Panc1 (cell line): ENCODE measurements at regions of chr18 and their contacts with region 1.

Region 1: DNA sequence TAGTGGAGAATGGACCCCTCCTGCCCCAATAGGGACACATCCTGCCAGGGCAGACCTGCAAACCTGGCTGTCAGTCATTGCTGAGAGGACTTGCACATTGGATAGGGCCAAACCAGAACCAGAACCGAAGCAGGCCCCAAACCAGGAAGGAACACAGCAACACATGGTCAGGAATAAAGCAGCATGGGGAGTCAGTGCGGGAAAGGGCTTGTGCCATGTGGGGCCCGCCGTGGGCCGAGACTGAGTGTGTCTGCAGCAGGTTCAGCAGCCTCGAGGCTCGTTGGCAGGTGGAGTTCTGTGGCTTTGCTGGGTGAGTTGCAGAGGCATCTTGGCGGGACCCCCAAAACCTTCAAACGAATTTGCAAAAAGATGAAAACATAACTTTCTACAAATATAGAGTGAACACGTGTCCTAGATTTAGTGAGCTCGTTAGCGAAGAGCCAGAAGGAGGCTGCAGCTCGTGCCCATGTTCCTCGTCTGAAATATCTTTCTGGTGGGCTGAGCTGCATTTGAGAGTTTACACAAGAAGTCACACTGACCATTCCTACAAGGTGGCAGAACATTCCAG is 44.9 kb upstream of the LDLRAD4 start:
- DNase-seq: no peak
- ATAC-seq: no peak
- H3K4me3 ChIP-seq: no peak overlapping the region
- H3K27ac ChIP-seq: no peak overlapping the region
- H3K4me1 ChIP-seq: no peaks in the 10 kb centered on the region; the same call in 1 of the 2 replicates
- H3K27me3 ChIP-seq: no peaks in the 10 kb centered on the region
- CTCF ChIP-seq: no peak

Region 2: GRCh38 chr18:13239171-13239956 is 65.7 kb after region 1 on chr18:
- CTCF ChIA-PET with region 1: no interaction called
- POLR2A ChIA-PET with region 1: no interaction called
- in situ Hi-C with region 1: no loop called
- intact Hi-C with region 1: no loop called
- DNase-seq: no peak
- ATAC-seq: no peak
- H3K4me3 ChIP-seq: no peak overlapping the region
- H3K27ac ChIP-seq: no peak overlapping the region
- H3K4me1 ChIP-seq: no peaks in the 10 kb centered on the region
- H3K27me3 ChIP-seq: no peaks in the 10 kb centered on the region; the same call in 1 of the 2 replicates
- CTCF ChIP-seq: no peak

Region 3: DNA sequence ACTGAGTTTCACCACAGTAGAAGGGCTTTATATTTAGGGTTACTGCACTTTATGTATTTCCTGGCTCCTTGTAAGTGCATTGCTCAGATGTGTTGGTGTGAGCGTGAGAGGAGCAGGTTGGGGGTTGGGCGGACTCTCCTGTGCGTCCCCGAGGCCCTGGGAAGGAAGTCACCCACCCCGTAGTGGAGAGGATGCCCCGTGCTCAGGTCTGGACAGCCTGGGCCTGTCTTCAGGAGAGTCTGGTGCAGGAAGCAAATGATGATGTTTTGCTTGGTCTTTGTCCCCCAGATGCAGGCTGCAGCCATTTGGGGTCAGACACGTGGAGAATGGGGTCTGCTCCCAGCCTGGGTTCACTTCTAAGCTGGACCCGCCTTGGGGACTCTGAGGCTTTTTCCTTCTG is 227.7 kb after region 1 on chr18:
- CTCF ChIA-PET with region 1: no interaction called
- POLR2A ChIA-PET with region 1: no interaction called
- in situ Hi-C with region 1: no loop called
- intact Hi-C with region 1: no loop called
- DNase-seq: no peak
- ATAC-seq: no peak
- H3K4me3 ChIP-seq: no peak overlapping the region
- H3K27ac ChIP-seq: no peak overlapping the region
- H3K4me1 ChIP-seq: no peaks in the 10 kb centered on the region
- H3K27me3 ChIP-seq: peaks cover 6% of the 10 kb centered on the region
- CTCF ChIP-seq: no peak

Region 4: GRCh38 chr18:13726232-13726971 is 552.7 kb after region 1 on chr18 and contains the starts of genes FAM210A and RNMT:
- CTCF ChIA-PET with region 1: interaction called, 11 read pairs
- POLR2A ChIA-PET with region 1: no interaction called
- in situ Hi-C with region 1: no loop called
- intact Hi-C with region 1: no loop called
- DNase-seq: peak; percentile 60
- ATAC-seq: peak; percentile 99
- H3K4me3 ChIP-seq: peak within 1 kb of the TSS; percentile 90 to 96
- H3K27ac ChIP-seq: peak within 1 kb of the TSS; percentile 92
- H3K4me1 ChIP-seq: peaks cover 15% of the 10 kb centered on the region
- H3K27me3 ChIP-seq: no peaks in the 10 kb centered on the region
- CTCF ChIP-seq: peak; percentile 21; the same call in 1 of the 2 replicates
- total RNA-seq, gene FAM210A: 21.0 TPM
- total RNA-seq, gene RNMT: 26.9 TPM